Activated CD4-positive, alpha-beta memory T cell treated with anti-CD3 and anti-CD28 coated beads, Interleukin-2, amount 10 ng/mL, durations not matched to agents 7 days and 5 days (primary cell): ENCODE measurements at regions of chr12 and their contacts with region 1.

Region 1: DNA sequence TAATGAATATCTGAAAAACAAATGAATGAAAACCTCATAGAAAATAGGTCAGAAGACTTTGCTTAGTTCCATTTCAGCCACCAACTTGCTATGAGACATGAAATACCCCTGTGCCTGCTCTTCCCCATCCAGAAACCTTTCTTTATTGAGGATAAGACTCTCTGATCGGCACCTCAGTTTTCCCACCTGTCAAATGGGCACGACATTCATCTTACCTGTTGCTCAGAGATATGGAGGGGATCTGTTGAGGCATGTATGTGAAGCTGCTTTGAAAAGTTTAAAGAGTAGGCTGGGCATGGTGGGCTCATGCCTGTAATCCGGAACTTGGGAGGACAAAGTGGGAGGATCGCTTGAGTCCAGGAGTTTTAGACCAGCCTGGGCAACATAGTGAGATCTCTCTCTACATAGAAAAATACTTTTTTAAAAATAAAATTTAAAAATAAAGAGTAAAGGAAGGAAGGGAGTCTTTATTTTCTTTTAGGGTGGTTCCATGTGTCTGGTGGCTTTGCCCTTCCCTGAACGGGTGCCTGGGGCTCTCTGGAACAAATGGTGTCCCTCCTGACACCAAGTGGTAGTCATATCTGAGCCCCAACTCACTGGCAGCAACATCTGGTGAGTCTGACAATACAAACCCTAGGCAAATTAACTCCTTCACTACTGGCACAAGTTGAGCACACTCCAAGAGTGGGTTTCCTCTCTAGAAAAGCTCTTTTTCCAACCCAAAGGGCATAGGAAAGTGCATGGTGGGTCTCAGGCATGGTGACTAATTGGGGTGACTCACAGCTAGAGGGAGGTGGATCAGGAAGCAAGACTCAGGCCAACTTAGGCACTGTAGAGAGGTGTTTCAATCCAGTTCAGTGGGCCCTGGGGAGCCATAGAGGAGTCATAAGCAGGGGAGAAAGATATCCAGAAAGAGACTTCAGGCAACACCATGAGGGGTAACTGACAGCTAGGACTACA is 42.1 kb downstream of the MAP1LC3B2 start:
- DNase-seq: no peak
- H3K4me3 Mint-ChIP-seq: no peak overlapping the region
- H3K27ac Mint-ChIP-seq: no peak overlapping the region
- H3K4me1 Mint-ChIP-seq: peaks cover 13% of the 10 kb centered on the region
- H3K27me3 Mint-ChIP-seq: peaks cover 7% of the 10 kb centered on the region

Region 2: DNA sequence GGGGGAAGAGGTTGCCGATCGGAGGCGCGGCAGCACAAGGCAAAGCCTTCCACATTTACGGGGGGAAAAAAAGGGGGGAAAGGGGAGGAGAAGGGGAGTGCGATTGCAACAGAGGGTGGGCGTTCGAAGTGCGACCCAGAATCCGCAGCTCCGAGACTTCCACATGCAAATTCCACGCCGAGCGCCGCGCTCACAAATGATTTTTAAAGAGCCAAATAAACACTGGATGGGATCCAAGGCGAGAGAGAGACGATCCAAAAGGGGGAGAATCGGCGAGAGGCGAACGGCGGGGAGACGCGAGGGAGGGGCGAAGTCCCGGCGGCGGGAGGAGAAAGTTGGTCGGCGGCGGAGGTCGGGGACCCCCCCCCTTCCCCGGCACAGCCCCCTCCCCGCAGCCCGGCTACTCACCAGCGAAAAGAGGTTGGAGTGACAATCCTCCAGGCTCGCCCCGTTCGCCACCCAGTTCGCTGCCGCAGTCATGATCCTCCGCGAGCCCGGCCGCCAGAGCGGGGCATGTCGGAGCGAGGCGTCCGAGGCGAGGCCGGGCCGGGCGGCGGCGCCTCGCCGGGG is 324.5 kb before region 1 on chr12:
- CTCF ChIA-PET with region 1: interaction called, 10 read pairs
- POLR2A ChIA-PET with region 1: no interaction called
- DNase-seq: peak; percentile 75
- H3K4me3 Mint-ChIP-seq: peak overlapping the region; percentile 88
- H3K27ac Mint-ChIP-seq: peak overlapping the region; percentile 84
- H3K4me1 Mint-ChIP-seq: peaks cover 36% of the 10 kb centered on the region
- H3K27me3 Mint-ChIP-seq: peaks cover 8% of the 10 kb centered on the region

Region 3: DNA sequence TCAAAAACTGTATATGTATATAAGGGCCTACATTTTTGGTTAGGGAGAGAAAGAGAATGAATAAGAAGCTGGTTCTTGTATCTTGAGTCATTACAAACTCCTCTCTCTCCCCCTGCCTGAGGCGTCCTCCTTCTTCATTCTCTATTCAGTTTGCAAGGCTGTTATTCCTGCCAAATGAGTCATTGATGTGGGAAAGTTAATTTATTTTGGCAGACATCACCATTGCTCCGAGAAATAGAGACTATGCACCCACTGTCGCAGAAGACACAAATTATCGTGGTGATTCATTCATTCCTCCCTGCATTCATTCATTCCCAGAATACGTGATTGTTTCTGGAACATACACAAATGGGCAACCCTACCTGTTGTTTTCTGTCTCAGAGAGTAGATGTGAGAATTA is 211.2 kb before region 1 on chr12:
- CTCF ChIA-PET with region 1: no interaction called
- POLR2A ChIA-PET with region 1: no interaction called
- DNase-seq: no peak
- H3K4me3 Mint-ChIP-seq: no peak overlapping the region
- H3K27ac Mint-ChIP-seq: no peak overlapping the region
- H3K4me1 Mint-ChIP-seq: no peaks in the 10 kb centered on the region
- H3K27me3 Mint-ChIP-seq: peaks cover 1% of the 10 kb centered on the region

Region 4: GRCh38 chr12:116620492-116621191 is 19.4 kb after region 1 on chr12:
- CTCF ChIA-PET with region 1: no interaction called
- POLR2A ChIA-PET with region 1: no interaction called
- DNase-seq: no peak
- H3K4me3 Mint-ChIP-seq: no peak overlapping the region
- H3K27ac Mint-ChIP-seq: no peak overlapping the region
- H3K4me1 Mint-ChIP-seq: no peaks in the 10 kb centered on the region
- H3K27me3 Mint-ChIP-seq: peaks cover 17% of the 10 kb centered on the region

Region 5: DNA sequence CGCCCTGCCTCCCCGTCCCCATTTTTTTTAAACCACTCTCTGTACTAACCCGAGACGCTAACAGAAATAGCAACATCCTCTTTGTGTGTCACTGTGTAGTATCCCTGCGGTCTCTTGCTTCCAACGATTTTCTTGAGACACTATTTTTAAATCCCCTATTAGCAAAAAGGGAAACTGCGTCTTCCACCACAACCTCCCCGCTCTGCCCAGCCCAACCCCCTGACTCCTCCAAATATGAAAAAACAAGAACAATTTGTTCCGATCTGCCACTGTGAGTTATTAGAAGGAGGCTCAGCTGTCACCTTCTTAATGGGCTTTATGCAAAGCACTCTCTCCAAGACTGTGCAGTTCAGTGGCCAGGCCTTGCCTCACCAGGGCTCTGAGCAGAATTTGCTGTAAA is 34.2 kb after region 1 on chr12:
- CTCF ChIA-PET with region 1: no interaction called
- POLR2A ChIA-PET with region 1: no interaction called
- DNase-seq: no peak
- H3K4me3 Mint-ChIP-seq: no peak overlapping the region
- H3K27ac Mint-ChIP-seq: no peak overlapping the region
- H3K4me1 Mint-ChIP-seq: no peaks in the 10 kb centered on the region
- H3K27me3 Mint-ChIP-seq: peaks cover 34% of the 10 kb centered on the region

Region 6: GRCh38 chr12:116650062-116650461 is 48.8 kb after region 1 on chr12:
- CTCF ChIA-PET with region 1: no interaction called
- POLR2A ChIA-PET with region 1: no interaction called
- DNase-seq: no peak
- H3K4me3 Mint-ChIP-seq: no peak overlapping the region
- H3K27ac Mint-ChIP-seq: no peak overlapping the region
- H3K4me1 Mint-ChIP-seq: peaks cover 3% of the 10 kb centered on the region
- H3K27me3 Mint-ChIP-seq: peaks cover 21% of the 10 kb centered on the region